ENCODE measurements at regions of chr18 and their contacts with region 1.

Region 1: DNA sequence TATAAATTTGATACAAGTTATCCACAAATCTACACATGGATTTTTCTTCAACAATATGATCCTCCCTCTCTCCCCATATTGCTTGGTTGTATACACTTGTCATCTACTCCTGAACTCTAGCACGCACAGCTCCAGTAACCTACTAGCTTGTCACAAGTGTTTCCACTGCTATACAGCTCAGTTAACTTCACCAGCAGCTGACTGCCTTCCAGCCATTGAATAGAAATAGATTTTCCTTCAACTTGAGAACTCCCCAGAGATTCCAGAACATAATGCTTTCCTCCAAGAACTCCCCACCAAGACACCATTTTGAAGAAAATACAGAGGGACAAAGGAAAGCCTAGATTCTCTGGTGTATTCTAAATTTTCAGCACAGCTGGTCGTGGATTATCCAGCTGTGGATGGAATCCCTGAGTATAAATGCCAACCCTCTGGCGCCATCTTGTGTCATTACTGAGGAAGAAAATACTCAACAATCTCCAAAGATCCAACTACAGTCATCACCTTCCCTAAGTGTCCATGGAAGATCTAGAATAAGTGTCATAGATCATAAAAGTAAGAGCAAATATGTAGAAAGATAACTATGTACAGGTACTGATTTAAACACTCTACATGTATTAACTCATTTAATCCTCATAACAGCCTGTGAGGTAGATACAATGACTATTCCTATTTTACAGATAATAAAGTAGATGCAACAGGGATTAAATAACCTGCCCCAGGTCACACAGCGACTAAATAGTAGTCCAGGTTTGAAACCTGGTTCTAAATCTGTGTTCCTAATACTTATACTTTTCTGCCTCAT is 156.7 kb downstream of the ARHGAP28 start:
- DNase-seq: peak; percentile 35
- ATAC-seq: peak; percentile 68
- H3K4me3 ChIP-seq: no peak overlapping the region
- H3K27ac ChIP-seq: no peak overlapping the region
- H3K4me1 ChIP-seq: no peaks in the 10 kb centered on the region
- H3K27me3 ChIP-seq: peaks cover 0 to 18% of the 10 kb centered on the region in 2 experiments; a peak in 3 of 5 replicates
- CTCF ChIP-seq: peak; percentile 77
- EP300 ChIP-seq: no peak
- POLR2A ChIP-seq: no peak
- RAD21 ChIP-seq: peak; percentile 69

Region 2: DNA sequence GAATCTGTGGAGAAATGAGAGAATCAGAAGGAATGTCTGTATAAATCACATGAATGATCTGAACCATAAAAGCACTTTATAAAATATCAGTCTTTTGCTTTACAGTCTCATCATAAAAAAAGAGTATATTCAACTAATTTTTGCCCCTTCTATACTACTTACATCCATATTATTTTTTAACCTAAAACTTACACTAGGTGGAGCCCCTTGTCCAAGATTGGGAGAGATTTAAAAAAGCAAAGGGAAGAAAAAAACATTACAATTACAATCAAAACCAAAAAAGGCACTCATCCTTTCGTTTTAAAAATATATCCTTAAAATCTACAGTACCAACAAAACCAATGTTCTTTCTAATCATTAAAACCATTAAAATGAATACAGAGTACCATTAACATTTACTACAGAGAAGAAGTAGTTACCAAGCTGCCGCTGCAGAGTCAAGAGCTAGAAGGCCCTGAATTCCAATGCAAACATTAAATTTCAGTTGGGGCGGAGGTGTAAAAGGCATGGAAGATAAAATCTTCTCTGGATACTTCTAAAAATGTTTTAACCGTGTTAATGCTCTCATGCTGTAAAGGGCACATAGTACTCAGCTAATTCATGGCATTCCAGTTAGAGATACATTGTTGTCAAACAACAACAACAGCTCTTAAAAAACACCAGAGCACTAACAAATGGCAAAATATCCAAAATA is 1285.7 kb before region 1 on chr18:
- CTCF ChIA-PET with region 1: no interaction called
- POLR2A ChIA-PET with region 1: no interaction called
- in situ Hi-C with region 1: loop called (anchors 25 kb)
- intact Hi-C with region 1: loop called (anchors 5 kb)
- DNase-seq: peak; percentile 16
- ATAC-seq: no peak
- H3K4me3 ChIP-seq: no peak overlapping the region
- H3K27ac ChIP-seq: no peak overlapping the region
- H3K4me1 ChIP-seq: peaks cover 8% of the 10 kb centered on the region
- H3K27me3 ChIP-seq: 0 out of 5 replicates have a peak, but pooled peaks cover 0 to 1% of the 10 kb centered on the region in 2 experiments
- CTCF ChIP-seq: peak; percentile 26
- EP300 ChIP-seq: no peak
- POLR2A ChIP-seq: no peak
- RAD21 ChIP-seq: no peak

Region 3: DNA sequence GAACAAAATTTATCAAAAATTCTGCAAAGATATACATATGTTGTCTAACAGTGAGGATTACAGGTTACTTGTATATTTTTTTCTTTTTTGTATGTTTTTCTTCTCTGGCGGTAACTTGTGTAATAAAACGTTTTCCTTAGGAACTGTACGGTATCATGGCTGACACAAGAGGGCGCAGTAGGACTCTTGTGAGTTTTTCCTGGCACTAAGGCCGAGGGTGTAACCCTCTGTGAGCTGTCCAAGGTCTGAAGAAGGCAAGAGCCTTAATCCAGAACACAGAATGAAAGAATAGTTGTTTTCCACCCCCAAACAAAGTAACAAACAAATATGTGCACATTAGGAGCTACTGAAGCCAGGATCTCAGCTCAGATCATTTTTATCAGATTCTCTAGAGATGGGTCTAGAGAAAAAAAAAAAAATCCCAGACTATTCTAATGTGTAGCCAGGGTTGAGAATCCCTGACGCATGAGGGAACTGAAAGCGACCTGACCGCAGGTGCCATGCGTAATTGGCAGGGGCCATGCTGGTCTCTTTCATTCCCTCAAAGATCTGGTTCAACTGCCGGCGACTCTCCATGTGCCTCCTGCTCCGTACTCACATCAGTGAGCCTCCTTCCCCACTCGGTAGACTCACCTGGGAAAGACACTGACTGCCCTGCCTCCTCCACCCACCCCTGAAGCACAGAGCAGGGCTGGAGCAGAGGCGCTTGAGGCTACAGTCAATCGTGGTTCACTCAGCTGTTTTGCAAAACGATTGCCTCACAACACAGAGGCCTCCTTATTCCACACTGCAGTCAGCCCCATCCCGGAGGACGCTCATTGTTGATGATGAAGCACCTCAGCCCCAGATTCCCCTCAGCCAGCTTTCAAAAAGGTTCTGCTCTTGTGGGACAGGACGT is 1017.7 kb before region 1 on chr18:
- CTCF ChIA-PET with region 1: no interaction called
- POLR2A ChIA-PET with region 1: no interaction called
- in situ Hi-C with region 1: no loop called
- intact Hi-C with region 1: loop called (anchors 5 kb)
- DNase-seq: peak; percentile 83
- ATAC-seq: peak; percentile 97
- H3K4me3 ChIP-seq: no peak overlapping the region
- H3K27ac ChIP-seq: no peak overlapping the region
- H3K4me1 ChIP-seq: no peaks in the 10 kb centered on the region
- H3K27me3 ChIP-seq: no peaks in the 10 kb centered on the region
- CTCF ChIP-seq: peak; percentile 84
- EP300 ChIP-seq: no peak
- POLR2A ChIP-seq: no peak
- RAD21 ChIP-seq: peak; percentile 82

Region 4: DNA sequence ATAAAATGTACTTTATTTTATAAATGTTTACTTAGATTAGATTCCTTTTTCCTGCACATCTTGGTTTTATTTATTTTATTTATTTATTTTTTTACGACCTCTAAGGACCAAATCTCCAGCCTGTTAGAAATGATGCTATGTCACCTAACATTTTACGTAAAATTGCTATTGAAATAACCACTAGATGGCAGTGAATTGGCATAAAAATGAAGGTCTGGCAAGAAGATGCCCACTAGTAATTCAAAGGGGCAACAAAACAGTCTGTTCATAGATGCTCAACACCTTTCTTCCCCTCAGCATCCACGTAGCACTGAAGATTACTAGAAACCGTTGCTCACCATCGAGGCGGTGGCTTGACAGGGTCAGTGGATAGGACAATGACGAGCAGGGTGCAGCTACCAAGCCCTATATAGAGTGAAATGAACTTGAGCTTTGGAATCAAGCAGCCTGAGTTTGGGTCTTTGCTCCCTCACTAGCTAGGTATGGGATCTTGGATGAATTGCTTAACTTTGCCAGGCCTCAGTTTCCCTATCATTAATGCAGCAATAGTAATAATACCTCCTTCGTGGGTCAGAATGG is 342.8 kb before region 1 on chr18:
- CTCF ChIA-PET with region 1: interaction called, 19 read pairs
- POLR2A ChIA-PET with region 1: no interaction called
- in situ Hi-C with region 1: loop called (anchors 5 kb)
- intact Hi-C with region 1: no loop called
- DNase-seq: peak; percentile 14
- ATAC-seq: no peak
- H3K4me3 ChIP-seq: no peak overlapping the region
- H3K27ac ChIP-seq: no peak overlapping the region
- H3K4me1 ChIP-seq: no peaks in the 10 kb centered on the region; the same call in 1 of the 2 replicates
- H3K27me3 ChIP-seq: no peaks in the 10 kb centered on the region
- CTCF ChIP-seq: peak; percentile 57
- EP300 ChIP-seq: no peak
- POLR2A ChIP-seq: no peak
- RAD21 ChIP-seq: no peak

Region 5: DNA sequence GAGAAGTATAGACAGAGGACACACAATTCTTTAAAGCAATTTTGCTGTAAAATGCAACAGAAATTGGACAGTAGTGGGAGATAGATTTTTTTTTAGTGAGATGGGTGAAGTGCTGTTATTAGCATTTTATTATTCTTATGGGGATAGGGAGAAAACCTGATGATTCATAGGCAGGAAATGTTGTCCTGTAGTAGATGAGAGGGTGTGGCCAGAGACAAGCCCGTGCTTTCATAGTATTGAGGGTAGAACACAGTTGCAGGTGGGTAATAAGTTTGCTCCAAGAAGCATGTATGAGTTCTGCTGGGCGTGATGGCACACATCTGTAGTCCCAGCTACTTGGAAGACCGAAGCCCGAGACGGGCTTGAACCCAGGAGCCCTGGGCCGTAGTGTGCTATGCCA is 285.0 kb before region 1 on chr18:
- CTCF ChIA-PET with region 1: no interaction called
- POLR2A ChIA-PET with region 1: no interaction called
- in situ Hi-C with region 1: no loop called
- intact Hi-C with region 1: loop called (anchors 5 kb)
- DNase-seq: no peak
- ATAC-seq: no peak
- H3K4me3 ChIP-seq: no peak overlapping the region
- H3K27ac ChIP-seq: no peak overlapping the region
- H3K4me1 ChIP-seq: no peaks in the 10 kb centered on the region
- H3K27me3 ChIP-seq: peaks cover 0 to 8% of the 10 kb centered on the region in 2 experiments; a peak in 1 of 5 replicates
- CTCF ChIP-seq: no peak
- EP300 ChIP-seq: no peak
- POLR2A ChIP-seq: no peak
- RAD21 ChIP-seq: no peak

Measured in HepG2 (cell line).